Heart right ventricle (tissue), 16 donors: ENCODE measurements at regions of chr17 and their contacts with region 1.

Region 1: GRCh38 chr17:27939474-27940465 is 46.6 kb upstream of the LYRM9 start:
- DNase-seq: no peak
- ATAC-seq: no peak
- H3K4me3 ChIP-seq: no peak overlapping the region
- H3K27ac ChIP-seq: no peak overlapping the region
- H3K4me1 ChIP-seq: no peaks in the 10 kb centered on the region
- H3K27me3 ChIP-seq: peaks cover 0 to 4% (median 0%) of the 10 kb centered on the region in 7 donors
- CTCF ChIP-seq: no peak

Region 2: GRCh38 chr17:27741361-27741861 is 198.4 kb before region 1 on chr17:
- intact Hi-C with region 1: no loop called
- DNase-seq: no peak
- ATAC-seq: peak in 1 of 8 donors; percentile 64
- H3K4me3 ChIP-seq: no peak overlapping the region
- H3K27ac ChIP-seq: peak overlapping the region in 1 of 10 donors; percentile 36
- H3K4me1 ChIP-seq: peaks cover 0 to 20% (median 0%) of the 10 kb centered on the region in 9 donors
- H3K27me3 ChIP-seq: peaks cover 0 to 2% (median 0%) of the 10 kb centered on the region in 7 donors
- CTCF ChIP-seq: no peak

Region 3: DNA sequence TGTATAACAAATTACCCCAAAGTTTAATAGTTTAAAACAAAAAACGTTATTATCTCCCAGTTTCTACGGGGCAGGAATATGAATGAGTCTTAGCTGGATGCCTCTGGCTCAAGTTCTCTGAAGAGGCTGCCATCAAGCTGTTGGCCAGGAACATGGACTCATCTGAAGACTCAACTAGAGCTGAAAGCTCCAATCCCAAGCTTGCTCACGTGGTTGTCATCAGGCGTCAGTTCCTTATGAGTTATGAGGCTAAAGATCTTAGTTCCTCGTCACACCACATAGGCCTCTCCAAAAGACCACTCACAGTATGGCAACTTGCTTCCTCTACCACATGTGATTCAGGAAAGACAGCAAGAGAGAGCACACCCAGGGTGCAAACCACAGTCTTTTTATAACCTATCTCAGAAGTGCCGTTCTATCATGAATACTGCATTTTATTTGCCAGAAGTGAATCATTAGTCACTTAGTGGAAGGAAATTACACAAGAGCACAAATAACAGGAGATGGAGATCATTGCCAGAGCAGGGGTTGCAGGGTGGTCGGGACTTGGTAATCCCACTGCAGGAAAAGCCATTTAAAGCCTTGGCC is 54.0 kb after region 1 on chr17:
- intact Hi-C with region 1: loop called in 1 of 10 experiments (anchors 10 kb)
- DNase-seq: no peak
- ATAC-seq: no peak
- H3K4me3 ChIP-seq: no peak overlapping the region
- H3K27ac ChIP-seq: no peak overlapping the region
- H3K4me1 ChIP-seq: peaks cover 0 to 12% (median 3%) of the 10 kb centered on the region in 9 donors
- H3K27me3 ChIP-seq: no peaks in the 10 kb centered on the region
- CTCF ChIP-seq: no peak

Region 4: GRCh38 chr17:28024746-28025145 is 85.0 kb after region 1 on chr17:
- intact Hi-C with region 1: loop called in 1 of 10 experiments (anchors 5 kb)
- DNase-seq: no peak
- ATAC-seq: no peak
- H3K4me3 ChIP-seq: no peak overlapping the region
- H3K27ac ChIP-seq: no peak overlapping the region
- H3K4me1 ChIP-seq: no peaks in the 10 kb centered on the region
- H3K27me3 ChIP-seq: no peaks in the 10 kb centered on the region
- CTCF ChIP-seq: no peak